K562 (cell line): ENCODE measurements at regions of chr5 and their contacts with region 1.

Region 1: GRCh38 chr5:10283927-10284635 is 23.6 kb downstream of the CMBL start:
- DNase-seq: peak; percentile 84 to 94 (median 86)
- ATAC-seq: peak; percentile 98
- H3K4me3 ChIP-seq: no peak overlapping the region
- H3K27ac ChIP-seq: no peak overlapping the region; the same call in 2 of the 3 replicates
- H3K4me1 ChIP-seq: peaks cover 7 to 24% of the 10 kb centered on the region in 2 experiments; a peak in 4 of 5 replicates
- H3K27me3 ChIP-seq: no peaks in the 10 kb centered on the region
- CTCF ChIP-seq: peak; percentile 96 to 99 (median 97)
- EP300 ChIP-seq: no peak
- POLR2A ChIP-seq: 0 out of 2 replicates have a peak, but pooled peaks have one; percentile 35
- RAD21 ChIP-seq: peak; percentile 97 to 99

Region 2: DNA sequence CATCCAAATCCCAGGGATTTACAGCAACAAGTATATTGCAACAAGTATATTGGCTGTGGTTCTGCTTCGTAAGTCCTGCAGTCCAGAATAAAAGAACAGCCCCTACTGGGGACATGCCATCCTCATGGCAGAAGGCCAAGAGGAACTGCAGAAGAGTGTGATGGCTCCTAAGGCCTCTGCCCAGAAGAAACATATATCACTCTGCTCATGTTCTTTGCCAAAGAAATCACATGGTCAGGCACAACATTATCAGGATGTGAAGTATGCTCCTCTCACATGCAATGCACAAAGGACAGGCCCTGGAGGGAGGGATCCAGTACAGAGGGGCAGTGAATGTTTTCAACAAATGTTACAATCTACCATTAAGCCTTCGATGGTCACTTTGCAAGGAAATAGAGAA is 494.3 kb before region 1 on chr5:
- CTCF ChIA-PET with region 1: no interaction called
- POLR2A ChIA-PET with region 1: no interaction called
- in situ Hi-C with region 1: no loop called
- intact Hi-C with region 1: no loop called
- DNase-seq: no peak
- ATAC-seq: no peak
- H3K4me3 ChIP-seq: no peak overlapping the region
- H3K27ac ChIP-seq: no peak overlapping the region
- H3K4me1 ChIP-seq: no peaks in the 10 kb centered on the region
- H3K27me3 ChIP-seq: no peaks in the 10 kb centered on the region
- CTCF ChIP-seq: no peak
- EP300 ChIP-seq: no peak
- POLR2A ChIP-seq: no peak
- RAD21 ChIP-seq: no peak

Region 3: DNA sequence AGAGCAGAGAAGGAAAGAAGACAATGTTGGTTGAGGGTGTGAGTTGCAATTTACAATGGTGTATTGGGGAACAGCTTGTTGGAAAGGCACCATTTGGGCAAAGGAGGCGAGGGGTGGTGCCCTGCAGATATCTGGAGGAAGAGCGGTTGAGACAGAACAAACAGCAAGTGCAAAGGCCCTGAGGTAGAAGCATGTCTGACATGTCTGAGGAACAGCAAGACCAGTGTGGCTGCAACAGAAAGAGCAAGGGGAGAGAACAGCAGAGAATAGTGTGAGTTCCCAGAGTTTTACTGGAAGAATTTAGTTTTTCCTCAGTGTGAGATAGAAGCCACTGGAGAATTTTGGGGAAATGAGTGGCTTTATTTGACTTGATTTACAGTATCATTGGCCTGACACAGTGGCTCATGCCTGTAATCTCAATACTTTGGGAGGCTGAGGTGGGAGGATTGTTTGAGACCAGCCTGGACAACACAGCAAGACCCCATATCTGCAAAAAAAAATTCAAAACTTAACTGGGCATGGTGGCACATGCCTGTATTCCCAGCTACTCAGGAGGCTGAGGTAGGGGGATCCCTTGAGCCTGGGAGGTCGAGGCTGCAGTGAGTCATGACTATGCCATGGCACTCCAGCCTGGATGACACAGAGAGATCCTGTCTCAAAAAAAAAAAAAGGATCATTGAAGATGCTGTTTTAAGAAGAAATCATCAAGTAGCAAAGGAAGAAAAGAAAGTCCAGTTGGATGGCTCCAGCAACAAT is 10.0 kb after region 1 on chr5:
- CTCF ChIA-PET with region 1: no interaction called
- POLR2A ChIA-PET with region 1: interaction called, 10 read pairs
- in situ Hi-C with region 1: no loop called
- intact Hi-C with region 1: no loop called
- DNase-seq: no peak
- ATAC-seq: no peak; the same call in 2 of the 3 replicates
- H3K4me3 ChIP-seq: no peak overlapping the region
- H3K27ac ChIP-seq: peak overlapping the region; percentile 81
- H3K4me1 ChIP-seq: peaks cover 44 to 60% of the 10 kb centered on the region in 2 experiments
- H3K27me3 ChIP-seq: no peaks in the 10 kb centered on the region
- CTCF ChIP-seq: no peak
- EP300 ChIP-seq: no peak
- POLR2A ChIP-seq: no peak
- RAD21 ChIP-seq: no peak

Region 4: DNA sequence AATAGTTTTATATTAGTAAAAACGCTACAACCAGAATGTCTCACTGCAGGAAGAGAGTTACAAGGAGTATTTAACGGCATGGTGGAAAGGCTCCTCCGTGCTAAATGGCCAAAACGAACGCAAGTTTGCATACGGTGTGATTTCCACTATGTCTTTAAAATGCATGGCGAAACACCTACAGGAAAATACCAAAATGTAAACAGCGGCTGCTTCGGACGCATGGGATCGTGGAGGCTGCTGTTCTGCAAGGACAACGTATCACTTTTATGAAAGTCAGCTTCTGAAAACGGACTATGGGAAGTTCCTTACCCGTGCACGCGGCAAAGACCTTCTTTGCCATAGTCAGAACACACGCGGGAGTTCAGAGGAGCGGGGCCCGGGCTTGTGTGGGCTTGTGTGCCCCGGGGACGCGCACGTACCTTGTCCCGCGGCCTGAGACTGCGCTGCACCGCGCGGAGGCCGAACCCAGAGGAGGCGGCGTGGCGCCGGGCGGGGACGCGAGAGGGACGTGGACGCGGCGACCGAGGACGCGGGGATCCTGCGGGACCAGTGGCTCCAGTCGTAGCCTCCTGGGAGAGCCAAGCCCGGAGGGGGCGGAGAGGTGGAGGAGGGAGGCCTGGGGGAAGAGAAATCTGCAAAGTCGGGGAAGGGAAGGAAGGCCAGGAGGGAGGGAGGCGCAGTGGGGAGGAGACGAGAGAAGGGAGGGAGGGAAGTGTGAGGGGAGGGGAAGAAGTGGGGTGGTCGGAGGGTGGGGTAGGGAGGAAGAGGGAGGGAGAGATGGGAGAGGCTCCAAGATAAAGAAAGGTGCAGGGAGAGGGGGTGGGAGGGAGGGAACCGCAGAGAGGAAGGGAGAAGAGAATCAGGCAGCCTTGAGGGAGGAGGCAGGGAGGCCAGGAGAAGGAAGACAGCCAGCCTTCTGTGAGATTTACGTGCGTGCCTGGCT is 23.4 kb after region 1 on chr5 and contains the start of gene CMBL:
- CTCF ChIA-PET with region 1: no interaction called
- POLR2A ChIA-PET with region 1: no interaction called
- in situ Hi-C with region 1: no loop called
- intact Hi-C with region 1: loop called (anchors 1 kb)
- DNase-seq: peak; percentile 90 to 95 (median 92)
- ATAC-seq: peak; percentile 70
- H3K4me3 ChIP-seq: peak within 1 kb of the TSS; percentile 78
- H3K27ac ChIP-seq: peak within 1 kb of the TSS; percentile 91
- H3K4me1 ChIP-seq: peaks cover 48 to 77% of the 10 kb centered on the region in 2 experiments
- H3K27me3 ChIP-seq: no peaks in the 10 kb centered on the region
- CTCF ChIP-seq: 0 out of 6 replicates have a peak, but pooled peaks of 1 of the 3 experiments have one; percentile 1
- EP300 ChIP-seq: peak; percentile 42
- POLR2A ChIP-seq: peak; percentile 86
- RAD21 ChIP-seq: peak in 1 of 2 experiments; percentile 11; a peak in 1 of 4 replicates
- polyA plus RNA-seq, gene CMBL: 53.4 to 71.1 TPM

Region 5: GRCh38 chr5:10364186-10364683 is 80.2 kb after region 1 on chr5:
- CTCF ChIA-PET with region 1: interaction called, 11 read pairs
- POLR2A ChIA-PET with region 1: interaction called, 7 read pairs
- in situ Hi-C with region 1: no loop called
- intact Hi-C with region 1: loop called (anchors 1 kb)
- DNase-seq: peak in 3 of 4 experiments; percentile 39 to 70 (median 60)
- ATAC-seq: peak; percentile 69
- H3K4me3 ChIP-seq: no peak overlapping the region
- H3K27ac ChIP-seq: no peak overlapping the region
- H3K4me1 ChIP-seq: peaks cover 17 to 19% of the 10 kb centered on the region in 2 experiments; a peak in 4 of 5 replicates
- H3K27me3 ChIP-seq: no peaks in the 10 kb centered on the region
- CTCF ChIP-seq: peak; percentile 68 to 84 (median 78)
- EP300 ChIP-seq: no peak
- POLR2A ChIP-seq: no peak
- RAD21 ChIP-seq: peak; percentile 65 to 85

Region 6: DNA sequence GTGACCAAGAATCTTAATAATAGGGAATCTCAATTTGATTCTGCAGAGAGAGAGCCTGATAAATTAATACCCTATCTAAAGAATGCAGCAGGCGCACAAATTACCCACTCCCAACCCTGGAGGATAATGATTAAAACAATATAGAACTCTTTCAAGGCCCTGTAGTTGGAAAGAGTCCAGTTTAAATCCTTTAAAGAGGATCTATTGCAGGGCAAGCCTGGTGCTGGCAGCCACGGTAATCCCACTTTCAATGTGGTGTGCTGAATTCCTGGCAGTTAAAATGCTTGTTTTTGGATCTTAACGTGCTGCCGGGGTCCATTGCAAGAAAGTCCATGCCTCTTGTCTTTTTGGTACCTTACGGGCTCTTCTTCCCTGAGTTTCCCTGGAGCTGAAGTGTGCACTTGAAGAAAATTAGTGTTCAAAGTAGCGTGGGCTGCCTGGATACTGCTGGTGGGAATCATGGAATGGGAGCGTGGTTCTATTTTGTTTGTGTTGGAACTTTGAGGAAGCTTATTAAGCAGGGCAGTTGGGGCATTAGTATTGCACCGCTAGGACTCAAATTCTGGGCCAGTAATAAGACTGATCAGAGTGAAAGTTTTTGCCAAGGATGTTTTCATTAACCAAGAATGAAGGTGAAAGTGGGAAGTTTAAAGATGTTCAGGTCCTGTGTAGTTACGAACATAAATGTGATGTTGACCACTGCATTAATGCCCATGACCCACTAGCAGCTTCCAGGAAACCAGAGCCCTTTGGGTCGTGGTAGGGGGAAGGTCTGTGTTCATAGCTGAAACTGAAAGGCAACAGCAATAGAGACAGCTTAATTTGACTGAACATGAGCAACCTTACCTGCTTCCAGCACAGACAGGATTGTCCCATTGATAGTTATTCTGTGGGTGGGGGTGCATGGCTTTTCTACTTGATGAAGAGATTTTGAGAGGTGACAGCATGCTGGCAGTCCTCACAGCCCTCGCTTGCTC is 90.3 kb after region 1 on chr5:
- CTCF ChIA-PET with region 1: no interaction called
- POLR2A ChIA-PET with region 1: no interaction called
- in situ Hi-C with region 1: loop called (anchors 5 kb)
- intact Hi-C with region 1: no loop called
- DNase-seq: no peak
- ATAC-seq: no peak
- H3K4me3 ChIP-seq: no peak overlapping the region
- H3K27ac ChIP-seq: no peak overlapping the region
- H3K4me1 ChIP-seq: peaks cover 0 to 5% of the 10 kb centered on the region in 2 experiments; a peak in 3 of 5 replicates
- H3K27me3 ChIP-seq: no peaks in the 10 kb centered on the region
- CTCF ChIP-seq: no peak
- EP300 ChIP-seq: no peak
- POLR2A ChIP-seq: no peak
- RAD21 ChIP-seq: no peak

Region 7: DNA sequence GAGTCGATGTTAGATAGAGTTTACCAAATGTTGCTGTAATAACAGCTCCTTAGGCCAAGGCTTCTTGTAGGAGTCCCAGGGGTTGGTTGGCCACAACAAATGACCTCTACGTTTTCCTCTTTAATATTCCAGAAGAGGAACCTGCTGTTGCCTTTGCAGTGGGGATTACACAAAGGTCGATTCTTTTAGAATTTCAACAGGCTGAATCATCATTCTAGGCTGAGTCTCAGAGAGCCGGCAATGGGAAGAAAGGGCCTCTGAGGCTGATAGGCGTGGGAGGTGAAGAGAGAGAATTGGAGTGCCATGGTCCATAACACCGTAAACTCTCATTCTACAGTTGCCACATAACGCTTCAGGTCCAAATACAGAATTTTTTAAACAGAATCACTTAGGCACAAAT is 882.8 kb after region 1 on chr5:
- CTCF ChIA-PET with region 1: no interaction called
- POLR2A ChIA-PET with region 1: no interaction called
- in situ Hi-C with region 1: no loop called
- intact Hi-C with region 1: no loop called
- DNase-seq: no peak
- ATAC-seq: no peak
- H3K4me3 ChIP-seq: no peak overlapping the region
- H3K27ac ChIP-seq: no peak overlapping the region
- H3K4me1 ChIP-seq: no peaks in the 10 kb centered on the region
- H3K27me3 ChIP-seq: no peaks in the 10 kb centered on the region
- CTCF ChIP-seq: no peak
- EP300 ChIP-seq: no peak
- POLR2A ChIP-seq: no peak
- RAD21 ChIP-seq: no peak